MCF 10A (cell line): ENCODE measurements at regions of chr1 and their contacts with region 1.

Region 1: DNA sequence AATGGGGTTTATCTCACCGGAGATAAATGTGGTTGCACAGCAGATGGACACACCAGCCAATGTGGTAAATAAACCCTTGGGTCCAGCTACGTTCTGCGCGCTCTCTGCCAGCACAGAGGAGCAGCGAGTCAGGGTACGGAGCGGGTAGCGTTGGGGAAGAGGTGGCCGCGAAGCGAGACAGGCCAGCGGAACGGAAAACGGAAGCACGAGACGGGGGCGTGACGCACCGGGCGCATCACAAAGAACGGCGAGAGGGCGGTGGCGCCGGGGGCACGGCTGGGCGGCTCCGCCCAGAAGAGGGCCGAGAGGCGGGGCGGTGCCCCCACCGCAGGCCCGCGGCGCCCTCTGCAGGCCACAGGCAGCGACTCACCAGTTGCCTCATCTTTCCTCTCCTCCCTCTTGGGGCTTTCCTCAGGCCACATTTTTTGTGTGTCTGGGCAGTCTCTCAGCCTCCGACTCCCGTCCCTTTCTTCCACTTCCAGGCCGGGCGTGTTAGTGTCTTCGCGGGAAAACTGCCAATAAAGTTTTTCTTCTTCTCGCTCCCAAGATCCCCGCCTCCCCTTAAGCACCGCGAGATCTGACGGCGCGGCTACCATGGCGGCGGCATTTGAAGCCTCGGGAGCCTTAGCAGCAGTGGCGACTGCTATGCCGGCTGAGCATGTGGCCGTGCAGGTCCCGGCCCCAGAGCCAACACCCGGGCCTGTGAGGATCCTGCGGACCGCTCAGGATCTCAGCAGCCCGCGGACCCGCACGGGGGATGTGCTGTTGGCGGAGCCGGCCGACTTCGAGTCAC is at the start of gene DDX20:
- DNase-seq: peak; percentile 96
- H3K4me3 Mint-ChIP-seq: peak within 1 kb of the TSS; percentile 95
- H3K27ac Mint-ChIP-seq: peak within 1 kb of the TSS; percentile 95
- H3K4me1 Mint-ChIP-seq: peaks cover 6% of the 10 kb centered on the region
- H3K27me3 Mint-ChIP-seq: no peaks in the 10 kb centered on the region
- CTCF ChIP-seq: peak; percentile 88
- total RNA-seq, gene DDX20: 14.8 and 16.8 TPM in 2 replicates

Region 2: GRCh38 chr1:111599781-111600693 is 155.5 kb before region 1 on chr1:
- CTCF ChIA-PET with region 1: no interaction called
- POLR2A ChIA-PET with region 1: no interaction called
- intact Hi-C with region 1: no loop called
- DNase-seq: no peak
- H3K4me3 Mint-ChIP-seq: no peak overlapping the region
- H3K27ac Mint-ChIP-seq: no peak overlapping the region
- H3K4me1 Mint-ChIP-seq: peaks cover 14% of the 10 kb centered on the region
- H3K27me3 Mint-ChIP-seq: peaks cover 12% of the 10 kb centered on the region
- CTCF ChIP-seq: no peak

Region 3: DNA sequence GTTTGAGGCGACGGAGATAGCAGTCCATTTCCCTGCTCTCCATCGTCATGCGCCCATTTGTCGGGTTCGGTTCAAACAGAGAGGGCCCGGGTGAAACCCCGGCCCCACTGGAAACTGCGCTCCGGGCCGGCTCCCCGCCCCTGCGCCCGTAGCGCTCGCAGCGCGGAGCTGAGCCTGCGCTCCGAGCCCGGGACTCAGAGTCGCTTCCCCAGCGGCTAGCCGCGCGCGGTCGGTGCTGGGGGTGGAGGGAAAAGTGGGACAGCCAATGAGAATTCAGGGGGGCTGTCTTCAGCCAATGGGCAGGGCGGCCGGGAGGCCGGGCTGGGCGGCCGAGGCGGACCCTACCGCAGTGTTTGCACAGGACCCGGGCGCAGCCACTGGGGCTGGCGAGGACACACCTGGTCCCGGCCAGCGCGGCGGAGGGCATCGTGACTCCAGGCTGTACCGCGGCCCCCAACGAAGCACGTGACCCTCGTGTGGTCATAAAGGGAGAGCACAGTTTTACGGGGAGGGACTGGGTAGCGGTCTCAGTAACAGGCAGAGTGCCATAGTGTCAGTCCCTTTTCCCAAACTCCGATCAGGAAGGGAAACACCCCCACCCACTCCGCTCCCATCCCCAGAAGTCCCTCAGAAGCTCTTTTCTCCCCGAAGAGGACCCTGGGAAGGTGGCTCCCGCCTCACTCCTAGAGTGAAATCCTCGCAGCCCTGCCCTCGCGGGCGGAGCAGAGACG is 16.2 kb before region 1 on chr1 and contains the start of gene INKA2:
- CTCF ChIA-PET with region 1: interaction called, 19 read pairs
- POLR2A ChIA-PET with region 1: interaction called, 86 read pairs
- intact Hi-C with region 1: no loop called
- DNase-seq: peak; percentile 92
- H3K4me3 Mint-ChIP-seq: peak within 1 kb of the TSS; percentile 82
- H3K27ac Mint-ChIP-seq: peak within 1 kb of the TSS; percentile 94
- H3K4me1 Mint-ChIP-seq: peaks cover 17% of the 10 kb centered on the region
- H3K27me3 Mint-ChIP-seq: no peaks in the 10 kb centered on the region
- CTCF ChIP-seq: no peak
- total RNA-seq, gene INKA2: 3.5 and 6.6 TPM in 2 replicates